AG04450 (cell line): ENCODE measurements at regions of chr11 and their contacts with region 1.

Region 1: GRCh38 chr11:36455658-36456111 is 54.4 kb downstream of the TRAF6 start:
- DNase-seq: peak; percentile 87
- H3K4me3 ChIP-seq: 0 out of 2 replicates have a peak overlapping the region, but pooled peaks have one; percentile 20
- H3K27ac ChIP-seq: peak overlapping the region; percentile 95
- H3K27me3 ChIP-seq: no peaks in the 10 kb centered on the region
- CTCF ChIP-seq: no peak

Region 2: DNA sequence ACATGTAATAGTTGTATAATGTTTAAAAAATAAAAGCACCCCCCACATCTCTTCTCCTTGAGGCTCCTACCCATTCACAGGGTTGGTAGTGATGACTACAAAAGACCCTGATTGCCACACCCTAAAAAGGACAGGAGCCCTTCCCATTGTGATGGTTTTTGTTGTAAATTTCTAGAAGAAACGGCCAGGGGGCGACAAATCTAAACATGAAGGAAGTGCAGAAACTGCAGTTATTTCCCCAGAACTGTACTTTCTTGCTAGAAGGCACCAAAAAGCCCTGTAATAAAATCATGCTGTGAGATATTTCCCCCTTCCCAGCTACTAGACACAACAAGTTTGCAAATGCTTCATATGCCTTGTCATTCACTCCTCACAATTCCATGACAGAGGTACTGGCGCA is 148.8 kb before region 1 on chr11:
- CTCF ChIA-PET with region 1: no interaction called
- POLR2A ChIA-PET with region 1: no interaction called
- DNase-seq: no peak
- H3K4me3 ChIP-seq: no peak overlapping the region
- H3K27ac ChIP-seq: no peak overlapping the region
- H3K27me3 ChIP-seq: peaks cover 2% of the 10 kb centered on the region
- CTCF ChIP-seq: peak; percentile 74

Region 3: GRCh38 chr11:36431429-36432092 is 24.1 kb before region 1 on chr11:
- CTCF ChIA-PET with region 1: interaction called, 4 read pairs
- POLR2A ChIA-PET with region 1: interaction called, 11 read pairs
- DNase-seq: peak; percentile 95
- H3K4me3 ChIP-seq: peak overlapping the region; percentile 39
- H3K27ac ChIP-seq: peak overlapping the region; percentile 88
- H3K27me3 ChIP-seq: no peaks in the 10 kb centered on the region
- CTCF ChIP-seq: peak; percentile 29